HepG2 (cell line): ENCODE measurements at regions of chr7 and their contacts with region 1.

Region 1: DNA sequence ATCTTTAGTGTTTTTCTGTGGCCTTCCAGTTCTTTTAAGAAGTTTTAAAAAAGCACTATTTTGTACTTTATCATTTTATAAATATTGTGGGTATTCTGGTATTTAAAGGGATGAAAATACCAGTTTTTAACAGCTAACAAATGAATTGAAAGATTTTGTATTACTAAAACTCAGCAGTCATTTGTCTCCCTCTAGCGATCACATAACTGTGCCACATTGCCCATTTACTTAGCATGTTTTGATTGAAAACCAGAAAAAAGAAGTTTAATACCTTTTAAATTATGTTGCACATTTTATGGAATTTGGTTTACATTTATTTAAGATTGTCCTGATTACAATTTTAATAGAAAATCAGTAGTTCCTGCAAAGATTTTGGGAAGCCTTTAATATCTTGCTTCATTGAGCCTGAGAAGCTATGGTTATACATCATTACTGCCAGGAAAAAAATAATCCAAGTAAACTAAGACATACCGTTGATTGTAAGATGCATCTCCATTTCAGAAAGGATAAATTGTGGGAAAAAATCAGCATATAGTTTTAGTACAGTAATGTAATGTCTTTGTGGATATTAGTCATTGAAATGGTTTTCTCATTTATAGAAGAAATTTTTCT is 34.9 kb downstream of the TAX1BP1 start:
- DNase-seq: peak; percentile 39
- ATAC-seq: no peak
- H3K4me3 ChIP-seq: no peak overlapping the region
- H3K27ac ChIP-seq: no peak overlapping the region
- H3K4me1 ChIP-seq: no peaks in the 10 kb centered on the region
- H3K27me3 ChIP-seq: no peaks in the 10 kb centered on the region
- CTCF ChIP-seq: peak; percentile 60
- EP300 ChIP-seq: no peak
- POLR2A ChIP-seq: no peak
- RAD21 ChIP-seq: peak; percentile 36; the same call in 1 of the 2 replicates

Region 2: DNA sequence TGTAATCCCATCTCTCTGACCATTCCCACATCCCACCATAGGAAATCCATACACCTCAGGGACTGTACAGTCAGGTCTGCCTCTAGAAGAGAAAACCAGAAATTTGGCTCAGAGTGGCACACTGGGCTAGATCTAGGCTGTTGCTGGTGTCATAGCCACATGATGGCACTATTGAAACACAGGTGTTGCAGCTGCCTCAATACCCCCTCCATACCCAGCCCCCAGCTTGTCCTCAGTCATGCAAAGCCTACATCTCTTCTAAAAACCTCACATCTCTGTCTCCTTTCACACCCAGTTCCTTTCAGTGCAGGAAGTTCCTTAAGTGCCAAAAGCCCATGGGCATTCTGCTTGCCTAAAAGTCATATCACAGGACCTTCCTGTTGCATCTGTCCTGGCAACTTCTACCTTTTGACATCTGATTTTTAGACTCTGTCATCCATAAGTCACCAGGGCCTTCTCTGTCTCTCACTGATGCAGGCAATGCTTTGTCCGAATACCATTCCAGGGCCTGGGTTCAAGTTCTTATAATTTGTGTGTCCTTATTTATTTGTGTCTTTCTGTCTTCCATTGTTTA is 85.1 kb before region 1 on chr7:
- CTCF ChIA-PET with region 1: interaction called, 9 read pairs
- POLR2A ChIA-PET with region 1: no interaction called
- in situ Hi-C with region 1: no loop called
- intact Hi-C with region 1: loop called (anchors 1 kb)
- DNase-seq: peak; percentile 35
- ATAC-seq: peak; percentile 92
- H3K4me3 ChIP-seq: no peak overlapping the region
- H3K27ac ChIP-seq: no peak overlapping the region
- H3K4me1 ChIP-seq: peaks cover 40% of the 10 kb centered on the region
- H3K27me3 ChIP-seq: no peaks in the 10 kb centered on the region
- CTCF ChIP-seq: peak; percentile 87
- EP300 ChIP-seq: no peak
- POLR2A ChIP-seq: no peak
- RAD21 ChIP-seq: peak; percentile 76